Esophagus muscularis mucosa (tissue), 4 donors: ENCODE measurements at regions of chr6 and their contacts with region 1.

Region 1: DNA sequence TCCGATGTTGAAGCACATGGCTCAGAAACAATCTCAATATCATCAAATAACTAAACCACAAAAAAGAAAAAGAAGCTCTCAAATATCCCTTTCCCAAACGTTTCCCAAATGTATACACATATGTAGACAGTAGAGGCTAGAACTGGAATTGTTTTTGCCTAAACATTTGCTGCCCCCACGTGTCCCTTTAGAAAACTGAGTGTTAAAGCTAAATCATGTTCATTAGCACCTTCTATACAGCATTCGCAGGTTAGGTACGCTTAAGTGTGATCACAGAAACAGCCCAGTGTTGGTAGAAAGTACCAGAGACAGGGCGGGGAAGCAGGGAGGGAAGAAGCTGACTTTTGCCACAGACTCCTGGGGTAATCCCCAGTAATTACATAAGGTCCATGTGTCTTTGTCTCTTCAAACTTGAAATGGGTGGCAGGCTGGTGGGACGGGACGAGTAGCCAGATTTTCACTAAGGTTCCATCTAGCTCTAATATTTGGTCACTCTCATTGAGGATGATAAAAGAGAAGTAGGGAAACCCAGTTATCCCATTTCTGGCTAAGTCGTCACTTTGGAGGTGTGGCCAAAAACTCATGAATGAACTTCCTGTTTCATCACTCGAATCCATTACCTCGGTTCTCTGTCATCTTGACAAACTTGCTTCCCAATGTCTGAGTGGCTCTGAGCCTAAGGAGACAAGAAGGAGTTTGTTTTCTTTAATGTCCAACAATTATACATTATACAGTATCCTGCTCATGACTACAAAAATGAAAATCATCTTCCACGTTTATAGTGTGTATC is 15.0 kb upstream of the TFAP2A start:
- DNase-seq: peak; percentile 45
- H3K4me3 ChIP-seq: peak overlapping the region in 1 of 4 donors; percentile 26
- H3K27ac ChIP-seq: no peak overlapping the region
- H3K4me1 ChIP-seq: peaks cover 10 to 20% (median 17%) of the 10 kb centered on the region in 4 donors
- H3K27me3 ChIP-seq: peaks cover 0 to 65% (median 10%) of the 10 kb centered on the region in 4 donors
- CTCF ChIP-seq: peak; percentile 50 to 57 (median 57)
- EP300 ChIP-seq: no peak
- POLR2A ChIP-seq: no peak

Region 2: DNA sequence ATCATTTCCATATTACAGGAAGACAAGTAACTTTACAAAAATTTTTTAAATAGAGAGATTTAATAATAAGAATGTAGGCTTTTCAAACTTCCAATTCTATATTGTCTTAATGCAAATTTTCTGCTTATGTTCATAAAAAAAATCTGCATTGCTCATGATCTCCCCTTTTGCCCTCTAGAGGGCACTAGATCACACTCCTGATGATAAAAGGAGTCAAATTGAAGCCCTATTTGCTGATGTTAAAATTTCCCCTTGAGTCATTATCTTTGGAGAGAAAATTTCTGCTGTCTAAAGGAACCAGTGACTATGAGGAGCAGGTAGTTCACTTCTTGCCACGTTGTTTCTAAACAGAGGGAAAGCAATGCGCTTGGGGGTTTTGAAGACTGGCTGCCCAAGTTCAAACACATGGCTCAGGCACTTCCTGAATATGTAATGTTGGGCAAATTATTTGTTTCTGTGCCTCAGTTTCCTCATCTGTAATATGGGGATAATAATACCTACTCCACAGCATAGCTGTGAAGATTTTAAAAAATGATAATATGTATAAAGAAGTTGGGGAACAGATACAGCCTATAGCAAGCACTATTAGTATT is 889.2 kb before region 1 on chr6:
- intact Hi-C with region 1: loop called (anchors 2 kb)
- DNase-seq: no peak
- H3K4me3 ChIP-seq: no peak overlapping the region
- H3K27ac ChIP-seq: no peak overlapping the region
- H3K4me1 ChIP-seq: no peaks in the 10 kb centered on the region
- H3K27me3 ChIP-seq: no peaks in the 10 kb centered on the region
- CTCF ChIP-seq: peak; percentile 39 to 67 (median 51)
- EP300 ChIP-seq: no peak
- POLR2A ChIP-seq: no peak

Region 3: DNA sequence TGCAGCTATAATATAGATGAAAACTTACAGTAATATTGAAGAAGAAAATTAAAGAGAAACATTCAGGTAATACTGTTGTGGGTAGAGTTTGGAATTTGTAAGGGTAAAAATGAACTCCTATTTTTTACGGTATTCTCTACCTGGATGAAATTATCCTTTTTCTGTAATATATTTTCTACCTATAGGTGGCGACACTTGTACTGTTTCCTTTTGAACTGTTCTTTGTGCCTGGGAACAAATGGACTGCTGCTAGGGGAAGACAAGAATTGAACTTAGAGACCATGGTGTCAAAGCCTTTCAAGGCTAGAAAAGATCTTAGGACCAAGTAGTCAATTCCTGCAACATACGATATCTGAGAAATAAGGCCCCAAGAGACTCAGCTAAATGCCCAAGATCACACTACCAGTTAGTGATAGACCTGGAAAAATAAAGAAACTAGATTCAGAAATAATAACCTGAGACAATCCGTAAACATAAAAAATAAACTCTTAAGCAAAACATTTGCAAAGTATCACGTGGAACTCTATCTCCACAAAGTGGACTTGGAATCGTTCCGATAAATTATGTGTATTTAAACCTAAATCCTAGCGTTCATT is 398.8 kb before region 1 on chr6:
- intact Hi-C with region 1: loop called (anchors 2 kb)
- DNase-seq: no peak
- H3K4me3 ChIP-seq: no peak overlapping the region
- H3K27ac ChIP-seq: no peak overlapping the region
- H3K4me1 ChIP-seq: no peaks in the 10 kb centered on the region
- H3K27me3 ChIP-seq: peaks cover 0 to 32% (median 0%) of the 10 kb centered on the region in 4 donors
- CTCF ChIP-seq: peak; percentile 32 to 54 (median 46)
- EP300 ChIP-seq: no peak
- POLR2A ChIP-seq: no peak

Region 4: DNA sequence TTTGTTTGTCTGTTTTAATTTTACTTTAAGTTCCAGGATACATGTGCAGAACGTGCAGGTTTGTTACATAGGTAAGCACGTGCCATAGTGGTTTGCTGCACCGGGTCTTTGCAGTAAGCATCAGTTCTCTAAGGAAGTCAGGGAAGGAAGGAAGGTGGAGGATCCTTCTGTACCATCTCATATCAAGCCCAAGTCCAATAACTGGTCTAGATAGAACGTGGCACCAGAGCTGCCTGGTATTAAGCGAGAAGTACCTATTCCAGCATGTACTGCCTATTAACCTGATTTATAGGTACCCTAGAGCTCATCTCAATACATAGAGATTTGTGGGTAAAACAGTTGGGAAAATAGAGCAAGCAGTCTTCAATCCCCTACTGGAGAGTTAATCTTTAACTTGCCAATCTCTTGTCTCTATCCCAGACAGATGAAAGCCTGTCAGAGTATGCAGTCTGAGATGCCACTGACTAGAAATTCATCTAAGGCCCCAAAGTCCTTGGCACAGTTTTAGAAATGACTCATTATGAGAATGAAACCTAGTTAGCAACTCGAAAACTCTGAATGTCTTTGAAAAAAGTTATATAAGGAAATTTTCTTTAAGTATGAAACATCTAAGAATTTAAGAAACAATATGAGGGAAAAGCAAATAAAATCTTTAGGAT is 159.9 kb before region 1 on chr6:
- intact Hi-C with region 1: no loop called
- DNase-seq: no peak
- H3K4me3 ChIP-seq: no peak overlapping the region
- H3K27ac ChIP-seq: no peak overlapping the region
- H3K4me1 ChIP-seq: peaks cover 0 to 13% (median 7%) of the 10 kb centered on the region in 4 donors
- H3K27me3 ChIP-seq: peaks cover 0 to 6% (median 0%) of the 10 kb centered on the region in 4 donors
- CTCF ChIP-seq: no peak
- EP300 ChIP-seq: no peak
- POLR2A ChIP-seq: no peak